Head of caudate nucleus (tissue), 42 donors: ENCODE measurements at regions of chr11 and their contacts with region 1.

Region 1: DNA sequence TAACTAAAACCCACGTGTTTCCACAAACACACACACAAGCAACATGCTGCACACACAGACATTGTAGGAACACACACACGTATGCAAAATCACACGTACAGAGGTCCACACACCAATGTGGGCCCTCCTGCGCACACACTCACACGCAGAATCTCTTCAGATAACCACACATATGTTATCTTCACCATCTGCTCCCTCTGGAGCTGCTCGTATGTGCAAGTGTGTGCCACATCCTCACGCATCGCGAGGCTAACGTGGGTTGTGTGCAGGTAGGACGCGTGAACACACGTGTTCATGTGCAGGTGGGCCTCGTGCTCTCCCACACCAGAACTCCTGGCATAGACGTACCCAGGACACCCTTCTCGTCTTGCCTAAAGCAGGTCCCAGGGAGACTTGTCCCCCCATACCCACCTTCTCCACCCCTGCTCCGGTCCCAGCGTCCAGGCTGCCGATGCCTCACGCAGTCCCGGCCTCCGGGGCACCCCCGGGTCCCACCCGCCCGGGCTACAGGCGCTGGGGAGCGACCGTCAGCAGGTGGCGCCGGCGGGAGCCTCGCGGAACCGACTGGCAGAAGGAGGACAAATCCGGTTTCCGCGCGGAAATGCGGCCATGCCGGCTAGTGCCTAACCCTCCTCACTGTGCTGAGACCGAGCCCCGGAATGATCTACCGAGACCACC is 10.3 kb upstream of the IGSF9B start:
- DNase-seq: peak in 41 of 42 donors; percentile 22 to 85 (median 72)

Region 2: GRCh38 chr11:133153031-133153430 is 814.0 kb before region 1 on chr11:
- intact Hi-C with region 1: no loop called
- DNase-seq: peak in 34 of 42 donors; percentile 16 to 80 (median 44)

Region 3: GRCh38 chr11:133787379-133788141 is 179.5 kb before region 1 on chr11:
- intact Hi-C with region 1: no loop called
- DNase-seq: peak in 3 of 42 donors; percentile 11 to 28 (median 16)

Region 4: GRCh38 chr11:133947321-133947756 is 19.7 kb before region 1 on chr11:
- intact Hi-C with region 1: no loop called
- DNase-seq: peak in 28 of 42 donors; percentile 26 to 79 (median 61)

Region 5: GRCh38 chr11:134014511-134014910 is 47.5 kb after region 1 on chr11:
- intact Hi-C with region 1: loop called (anchors 10 kb)
- DNase-seq: peak in 1 of 42 donors; percentile 42

Region 6: DNA sequence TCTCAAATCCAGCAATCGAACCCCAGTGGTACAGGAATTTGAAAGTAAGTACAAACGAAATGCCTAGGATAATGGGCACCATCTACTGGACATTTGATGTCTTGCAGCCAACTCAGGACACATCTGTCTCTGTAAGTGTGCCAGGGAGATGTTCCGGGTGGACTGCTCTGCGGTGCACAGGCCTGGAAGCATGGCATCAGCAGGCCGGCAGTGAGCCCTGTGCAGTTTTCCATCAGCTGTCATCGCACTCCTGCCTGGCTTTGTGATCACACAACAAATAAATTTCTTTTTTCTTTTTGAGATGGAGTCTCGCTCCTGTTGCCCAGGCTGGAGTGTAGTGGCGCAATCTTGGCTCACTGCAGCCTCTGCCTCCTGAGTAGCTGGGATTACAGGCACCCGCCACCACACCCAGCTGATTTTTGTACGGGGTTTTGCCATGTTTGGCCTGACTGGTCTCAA is 172.8 kb after region 1 on chr11:
- intact Hi-C with region 1: loop called (anchors 10 kb)
- DNase-seq: peak; percentile 42 to 95 (median 83)